Activated CD8-positive, alpha-beta T cell treated with anti-CD3 and anti-CD28 coated beads for 36 hours (primary cell): ENCODE measurements at regions of chr3 and their contacts with region 1.

Region 1: DNA sequence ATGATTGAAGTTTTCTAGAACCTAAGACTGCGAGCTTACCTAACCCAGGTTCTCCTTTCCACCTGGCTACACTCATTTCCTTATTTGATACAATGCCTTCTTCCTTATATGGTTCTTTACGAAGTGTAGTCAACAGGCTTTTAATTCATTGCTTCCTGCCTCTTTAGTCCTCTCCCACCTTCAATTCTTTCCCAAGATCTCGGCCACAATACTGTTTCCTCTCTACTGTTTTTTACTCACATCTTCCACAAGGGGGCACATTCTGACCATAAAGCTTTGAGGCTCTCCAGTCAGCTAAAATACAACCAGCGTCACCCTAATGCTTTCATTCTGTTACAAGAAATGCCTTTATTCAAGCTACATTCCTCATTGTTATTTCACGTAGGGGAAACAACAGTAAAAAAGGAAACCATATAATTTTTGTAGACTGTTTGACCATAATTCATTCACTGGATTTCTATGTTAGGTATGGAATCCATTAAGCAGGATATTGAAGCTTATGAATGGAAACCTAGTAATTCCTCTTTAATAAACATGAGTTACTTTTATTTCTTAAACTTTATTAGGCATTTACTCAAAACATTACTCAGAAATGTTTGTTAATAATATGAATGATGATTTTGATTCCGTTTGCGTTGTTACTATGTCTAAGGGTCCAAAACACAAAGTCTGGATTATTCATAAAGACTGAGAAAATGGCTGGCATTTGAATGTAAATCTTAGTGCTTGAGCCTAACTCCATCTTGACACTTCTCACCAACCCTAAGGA is 29.5 kb upstream of the VEPH1 start:
- DNase-seq: peak; percentile 12
- ATAC-seq: peak; percentile 66
- H3K4me3 Mint-ChIP-seq: no peak overlapping the region
- H3K27ac Mint-ChIP-seq: no peak overlapping the region
- H3K4me1 Mint-ChIP-seq: no peaks in the 10 kb centered on the region
- H3K27me3 Mint-ChIP-seq: peaks cover 1% of the 10 kb centered on the region
- CTCF ChIP-seq: peak; percentile 64

Region 2: GRCh38 chr3:157544501-157545130 is 11.9 kb after region 1 on chr3:
- CTCF ChIA-PET with region 1: interaction called, 11 read pairs
- POLR2A ChIA-PET with region 1: no interaction called
- intact Hi-C with region 1: no loop called
- DNase-seq: no peak
- ATAC-seq: no peak
- H3K4me3 Mint-ChIP-seq: no peak overlapping the region
- H3K27ac Mint-ChIP-seq: no peak overlapping the region
- H3K4me1 Mint-ChIP-seq: no peaks in the 10 kb centered on the region
- H3K27me3 Mint-ChIP-seq: peaks cover 29% of the 10 kb centered on the region
- CTCF ChIP-seq: no peak

Region 3: GRCh38 chr3:157572559-157573270 is 40.0 kb after region 1 on chr3:
- CTCF ChIA-PET with region 1: interaction called, 105 read pairs
- POLR2A ChIA-PET with region 1: no interaction called
- intact Hi-C with region 1: loop called (anchors 1 kb)
- DNase-seq: peak; percentile 25
- ATAC-seq: peak; percentile 30
- H3K4me3 Mint-ChIP-seq: no peak overlapping the region
- H3K27ac Mint-ChIP-seq: no peak overlapping the region
- H3K4me1 Mint-ChIP-seq: no peaks in the 10 kb centered on the region
- H3K27me3 Mint-ChIP-seq: peaks cover 7% of the 10 kb centered on the region
- CTCF ChIP-seq: peak; percentile 89